ENCODE measurements at regions of chr11 and their contacts with region 1.

Region 1: GRCh38 chr11:124194698-124195410 is 11.7 kb downstream of the OR10D3 start:
- DNase-seq: peak; percentile 70
- ATAC-seq: peak; percentile 87
- H3K4me3 Mint-ChIP-seq: no peak overlapping the region
- H3K27ac Mint-ChIP-seq: no peak overlapping the region
- H3K4me1 Mint-ChIP-seq: no peaks in the 10 kb centered on the region
- H3K27me3 Mint-ChIP-seq: peaks cover 6% of the 10 kb centered on the region
- CTCF ChIP-seq: peak; percentile 75

Region 2: GRCh38 chr11:124114942-124115781 is 79.7 kb before region 1 on chr11 and contains the start of gene VWA5A:
- CTCF ChIA-PET with region 1: interaction called, 13 read pairs
- POLR2A ChIA-PET with region 1: no interaction called
- intact Hi-C with region 1: loop called (anchors 10 kb)
- DNase-seq: peak; percentile 90
- ATAC-seq: peak; percentile 100
- H3K4me3 Mint-ChIP-seq: peak within 1 kb of the TSS; percentile 82
- H3K27ac Mint-ChIP-seq: peak within 1 kb of the TSS; percentile 80
- H3K4me1 Mint-ChIP-seq: peaks cover 10% of the 10 kb centered on the region
- H3K27me3 Mint-ChIP-seq: peaks cover 9% of the 10 kb centered on the region
- CTCF ChIP-seq: no peak
- total RNA-seq, gene VWA5A: 4.4 TPM

Region 3: GRCh38 chr11:124277804-124278203 is 83.0 kb after region 1 on chr11:
- CTCF ChIA-PET with region 1: no interaction called
- POLR2A ChIA-PET with region 1: no interaction called
- intact Hi-C with region 1: no loop called
- DNase-seq: no peak
- ATAC-seq: no peak
- H3K4me3 Mint-ChIP-seq: no peak overlapping the region
- H3K27ac Mint-ChIP-seq: no peak overlapping the region
- H3K4me1 Mint-ChIP-seq: peaks cover 6% of the 10 kb centered on the region
- H3K27me3 Mint-ChIP-seq: no peaks in the 10 kb centered on the region
- CTCF ChIP-seq: no peak

Region 4: DNA sequence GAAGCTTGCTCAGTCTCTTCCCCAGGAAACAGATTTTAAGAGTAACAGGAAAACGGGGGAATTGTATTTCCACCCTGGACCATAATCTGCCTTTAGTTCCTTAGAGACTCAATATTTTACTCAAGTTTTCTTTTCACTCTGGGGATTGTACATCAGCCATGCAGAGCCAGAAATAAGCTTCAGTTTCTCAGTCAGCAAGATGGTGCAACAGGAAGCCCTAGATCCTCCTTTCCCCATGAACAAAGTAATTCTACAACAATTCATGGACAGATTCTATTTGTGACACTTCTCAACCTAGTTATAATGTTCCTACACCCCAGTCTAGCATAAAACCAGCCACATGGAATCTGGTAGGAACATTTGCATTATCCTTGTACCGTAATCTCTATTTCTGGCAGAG is 164.7 kb after region 1 on chr11:
- CTCF ChIA-PET with region 1: no interaction called
- POLR2A ChIA-PET with region 1: no interaction called
- intact Hi-C with region 1: no loop called
- DNase-seq: no peak
- ATAC-seq: no peak
- H3K4me3 Mint-ChIP-seq: no peak overlapping the region
- H3K27ac Mint-ChIP-seq: no peak overlapping the region
- H3K4me1 Mint-ChIP-seq: no peaks in the 10 kb centered on the region
- H3K27me3 Mint-ChIP-seq: no peaks in the 10 kb centered on the region
- CTCF ChIP-seq: no peak

Region 5: GRCh38 chr11:124788521-124788920 is 593.7 kb after region 1 on chr11:
- CTCF ChIA-PET with region 1: no interaction called
- POLR2A ChIA-PET with region 1: no interaction called
- intact Hi-C with region 1: no loop called
- DNase-seq: no peak
- ATAC-seq: no peak
- H3K4me3 Mint-ChIP-seq: no peak overlapping the region
- H3K27ac Mint-ChIP-seq: no peak overlapping the region
- H3K4me1 Mint-ChIP-seq: peaks cover 34% of the 10 kb centered on the region
- H3K27me3 Mint-ChIP-seq: no peaks in the 10 kb centered on the region
- CTCF ChIP-seq: no peak

Measured in activated CD8-positive, alpha-beta T cell treated with anti-CD3 and anti-CD28 coated beads for 36 hours (primary cell).